CD8-positive, alpha-beta T cell (primary cell): ENCODE measurements at regions of chr1 and their contacts with region 1.

Region 1: GRCh38 chr1:32291708-32292492 is at the start of gene HDAC1:
- DNase-seq: peak; percentile 94 to 98 (median 97)
- ATAC-seq: peak; percentile 93
- H3K4me3 ChIP-seq: peak within 1 kb of the TSS; percentile 84 to 92
- H3K4me3 Mint-ChIP-seq: peak within 1 kb of the TSS; percentile 100
- H3K27ac ChIP-seq: peak within 1 kb of the TSS; percentile 68 to 69
- H3K27ac Mint-ChIP-seq: peak within 1 kb of the TSS; percentile 98
- H3K4me1 ChIP-seq: peaks cover 45% of the 10 kb centered on the region
- H3K4me1 Mint-ChIP-seq: peaks cover 52% of the 10 kb centered on the region
- H3K27me3 ChIP-seq: no peaks in the 10 kb centered on the region
- H3K27me3 Mint-ChIP-seq: no peaks in the 10 kb centered on the region
- CTCF ChIP-seq: no peak
- total RNA-seq, gene HDAC1: 57.8 to 61.4 TPM

Region 2: DNA sequence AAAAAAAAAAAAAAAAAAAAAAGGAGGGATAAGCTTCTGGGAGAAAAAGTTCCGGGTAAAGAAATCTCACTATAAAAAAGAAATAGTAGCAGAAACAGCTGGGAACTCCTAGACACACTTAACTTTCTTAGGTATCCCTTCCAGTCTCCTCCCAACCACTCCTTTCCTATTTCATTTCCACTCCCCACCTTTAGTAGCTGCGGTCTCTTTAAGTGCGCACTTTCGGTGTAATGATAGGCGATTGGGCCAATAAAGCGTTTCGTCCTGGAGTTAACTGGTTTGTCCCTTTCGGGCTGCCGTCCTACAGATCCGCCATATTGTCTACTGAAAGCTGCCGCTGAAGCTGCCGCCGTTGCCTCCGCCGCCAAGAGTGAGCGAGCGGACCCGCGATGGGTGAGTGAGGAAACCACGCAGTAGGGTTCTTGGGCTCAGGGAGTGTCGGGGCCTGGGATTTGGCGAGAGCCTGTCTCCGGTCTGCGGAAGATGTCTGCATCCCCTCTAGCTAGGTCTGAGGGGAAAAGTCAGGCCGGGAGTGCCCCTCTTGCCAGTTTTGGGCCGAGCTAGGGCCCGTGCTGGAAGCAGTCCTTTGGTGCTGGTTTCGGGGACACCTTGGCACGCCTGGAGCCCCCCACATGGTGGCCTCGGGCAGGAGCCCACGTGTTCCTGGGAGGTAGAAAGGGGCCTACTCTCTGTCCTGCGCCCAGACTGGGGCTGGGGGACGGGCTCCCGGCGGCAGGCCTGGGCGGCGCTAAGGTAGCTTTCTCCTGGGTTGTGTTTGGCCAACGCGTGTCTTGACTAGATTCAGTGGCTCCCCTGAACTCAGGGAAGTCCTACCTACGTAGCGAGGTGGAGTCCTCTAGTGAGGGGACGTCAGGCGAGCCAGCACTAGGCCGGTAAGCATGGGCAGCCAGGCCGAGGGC is 183.9 kb before region 1 on chr1 and contains the start of gene KPNA6:
- CTCF ChIA-PET with region 1: no interaction called
- POLR2A ChIA-PET with region 1: interaction called, 5 read pairs
- intact Hi-C with region 1: loop called (anchors 1 to 5 kb)
- DNase-seq: peak; percentile 83 to 98 (median 90)
- ATAC-seq: peak; percentile 89
- H3K4me3 ChIP-seq: peak within 1 kb of the TSS; percentile 87 to 95
- H3K4me3 Mint-ChIP-seq: peak within 1 kb of the TSS; percentile 98
- H3K27ac ChIP-seq: peak within 1 kb of the TSS; percentile 84 to 93
- H3K27ac Mint-ChIP-seq: peak within 1 kb of the TSS; percentile 98
- H3K4me1 ChIP-seq: peaks cover 45% of the 10 kb centered on the region
- H3K4me1 Mint-ChIP-seq: peaks cover 50% of the 10 kb centered on the region
- H3K27me3 ChIP-seq: no peaks in the 10 kb centered on the region
- H3K27me3 Mint-ChIP-seq: no peaks in the 10 kb centered on the region
- CTCF ChIP-seq: no peak
- total RNA-seq, gene KPNA6: 51.7 to 58.7 TPM

Region 3: DNA sequence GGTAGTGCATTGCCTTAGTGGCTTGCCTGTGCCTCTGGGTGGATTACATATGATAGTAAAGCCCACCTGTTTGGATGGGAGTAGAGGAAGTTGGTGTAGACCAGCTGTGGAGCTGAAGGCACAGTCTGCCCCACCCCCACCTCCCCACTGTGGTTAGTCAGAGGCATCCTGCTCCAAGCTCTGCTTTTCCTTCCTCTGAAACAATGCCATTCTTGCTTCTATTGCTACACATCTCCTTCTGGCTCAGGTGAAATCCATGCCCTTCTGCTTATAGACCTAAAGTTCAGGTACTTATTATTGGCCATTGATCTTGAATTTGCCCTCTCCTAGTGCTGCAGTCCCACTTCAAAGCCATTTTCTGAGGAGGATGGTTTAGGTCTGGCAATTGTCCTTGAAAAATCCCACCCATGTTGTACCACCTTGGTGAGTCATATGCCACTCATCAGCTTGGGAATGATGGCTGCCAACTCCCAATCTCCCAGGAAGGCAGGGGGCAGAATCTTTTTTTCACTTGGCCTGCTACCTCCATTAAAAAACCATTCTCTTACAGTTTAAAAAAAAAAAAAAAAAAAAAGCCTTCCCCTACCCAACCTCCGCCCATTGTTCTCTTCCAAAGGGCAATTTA is 119.2 kb before region 1 on chr1:
- CTCF ChIA-PET with region 1: no interaction called
- POLR2A ChIA-PET with region 1: no interaction called
- intact Hi-C with region 1: no loop called
- DNase-seq: no peak
- ATAC-seq: no peak
- H3K4me3 ChIP-seq: no peak overlapping the region
- H3K4me3 Mint-ChIP-seq: no peak overlapping the region
- H3K27ac ChIP-seq: no peak overlapping the region
- H3K27ac Mint-ChIP-seq: peak overlapping the region; percentile 21
- H3K4me1 ChIP-seq: peaks cover 9% of the 10 kb centered on the region
- H3K4me1 Mint-ChIP-seq: peaks cover 9% of the 10 kb centered on the region
- H3K27me3 ChIP-seq: no peaks in the 10 kb centered on the region
- H3K27me3 Mint-ChIP-seq: no peaks in the 10 kb centered on the region
- CTCF ChIP-seq: no peak

Region 4: DNA sequence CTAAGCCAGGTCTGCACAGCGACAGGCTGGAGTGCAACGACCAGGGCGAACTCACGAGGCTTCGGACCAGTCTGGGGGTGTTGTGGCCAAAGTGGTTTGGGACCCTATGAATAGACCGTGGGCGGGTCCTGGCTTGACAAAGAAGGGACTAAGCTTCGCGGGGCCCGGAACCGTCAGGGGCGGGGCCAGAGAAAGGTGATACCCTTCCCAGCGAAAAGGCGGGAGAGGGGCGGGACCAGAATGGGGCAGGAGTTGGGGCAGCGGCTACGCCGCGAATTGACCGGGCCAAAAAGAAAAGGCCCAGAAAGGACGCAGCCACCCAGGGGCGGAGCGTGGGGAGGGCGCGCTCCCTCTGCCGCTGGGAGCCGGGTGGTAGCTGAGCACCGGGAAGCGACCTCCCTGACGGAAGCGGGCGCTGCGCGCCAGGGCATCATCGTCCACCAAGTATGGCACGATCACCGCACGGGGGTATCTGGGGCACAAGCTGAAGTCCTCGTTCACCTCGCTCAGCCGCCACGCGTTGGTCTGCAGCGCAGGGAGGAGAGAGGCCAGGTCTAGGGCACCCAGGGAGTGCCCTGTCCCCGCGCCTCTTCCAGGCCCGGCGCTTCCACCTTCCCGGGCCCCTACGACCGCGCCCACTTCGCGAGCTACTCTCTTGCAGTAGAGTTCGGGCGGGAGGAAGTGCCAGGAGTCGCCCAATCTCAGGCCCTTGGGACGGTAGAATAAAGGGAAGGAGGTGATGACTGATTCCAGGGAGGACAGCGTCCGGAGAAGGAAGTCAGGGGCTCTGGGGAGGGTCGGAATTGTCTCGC is 51.6 kb before region 1 on chr1:
- CTCF ChIA-PET with region 1: interaction called, 5 read pairs
- POLR2A ChIA-PET with region 1: interaction called, 13 read pairs
- intact Hi-C with region 1: no loop called
- DNase-seq: peak in 8 of 9 experiments; percentile 26 to 85 (median 76)
- ATAC-seq: peak; percentile 69
- H3K4me3 ChIP-seq: peak overlapping the region; percentile 76 to 89
- H3K4me3 Mint-ChIP-seq: peak overlapping the region; percentile 90
- H3K27ac ChIP-seq: peak overlapping the region; percentile 22 to 49
- H3K27ac Mint-ChIP-seq: peak overlapping the region; percentile 62
- H3K4me1 ChIP-seq: peaks cover 26% of the 10 kb centered on the region
- H3K4me1 Mint-ChIP-seq: peaks cover 23% of the 10 kb centered on the region
- H3K27me3 ChIP-seq: no peaks in the 10 kb centered on the region
- H3K27me3 Mint-ChIP-seq: no peaks in the 10 kb centered on the region
- CTCF ChIP-seq: peak; percentile 24

Region 5: GRCh38 chr1:32273388-32274208 is 18.3 kb before region 1 on chr1:
- CTCF ChIA-PET with region 1: interaction called, 5 read pairs
- POLR2A ChIA-PET with region 1: interaction called, 26 read pairs
- intact Hi-C with region 1: loop called (anchors 1 to 2 kb)
- DNase-seq: peak; percentile 58 to 96 (median 87)
- ATAC-seq: peak; percentile 88
- H3K4me3 ChIP-seq: peak overlapping the region; percentile 23 to 53
- H3K4me3 Mint-ChIP-seq: peak overlapping the region; percentile 83
- H3K27ac ChIP-seq: peak overlapping the region; percentile 36 to 77
- H3K27ac Mint-ChIP-seq: peak overlapping the region; percentile 98
- H3K4me1 ChIP-seq: peaks cover 78% of the 10 kb centered on the region
- H3K4me1 Mint-ChIP-seq: peaks cover 67% of the 10 kb centered on the region
- H3K27me3 ChIP-seq: no peaks in the 10 kb centered on the region
- H3K27me3 Mint-ChIP-seq: no peaks in the 10 kb centered on the region
- CTCF ChIP-seq: no peak

Region 6: DNA sequence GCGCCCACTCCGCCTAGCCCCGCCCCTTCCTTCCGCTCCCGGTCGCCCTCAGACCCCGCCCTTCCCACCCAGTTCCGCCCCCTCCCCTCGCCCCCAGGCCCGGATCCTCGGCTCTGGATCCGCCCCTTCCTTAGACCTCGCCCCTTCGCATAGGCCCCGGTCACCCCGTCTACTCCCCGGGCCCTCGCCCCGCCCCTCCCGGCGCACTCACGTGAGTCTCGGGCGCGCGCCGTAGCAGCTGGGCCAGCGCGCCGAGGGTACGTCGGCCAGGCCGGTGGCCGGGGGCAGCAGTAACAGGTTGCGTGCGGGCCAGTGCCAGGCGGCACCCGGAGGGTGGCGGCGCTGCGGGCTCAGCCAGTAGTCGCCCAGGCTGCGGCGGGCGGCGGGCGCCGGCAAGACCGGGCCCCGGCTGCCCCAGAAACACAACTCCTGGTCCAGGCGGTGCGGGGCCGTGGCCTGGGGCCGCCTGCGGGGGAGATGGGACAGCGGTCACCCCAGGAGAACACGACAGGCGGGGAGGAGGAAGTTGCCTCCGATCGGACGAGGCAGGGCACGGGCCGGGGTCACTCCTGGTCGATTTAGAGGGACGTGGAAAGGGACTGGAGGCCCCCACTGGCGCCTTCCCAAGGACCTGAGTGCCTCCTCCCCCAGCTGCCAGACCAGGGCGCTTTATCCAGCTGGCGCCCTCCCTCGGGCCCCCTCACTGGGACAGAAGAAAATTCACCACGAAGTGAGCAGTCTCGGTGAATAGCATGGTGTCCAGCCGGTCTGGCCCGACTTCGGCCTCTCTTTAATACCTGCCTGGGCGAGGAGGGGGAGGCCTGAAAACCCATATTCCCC is 59.7 kb after region 1 on chr1:
- CTCF ChIA-PET with region 1: no interaction called
- POLR2A ChIA-PET with region 1: no interaction called
- intact Hi-C with region 1: loop called in 1 of 2 experiments (anchors 1 kb)
- DNase-seq: peak; percentile 81 to 97 (median 90)
- ATAC-seq: peak; percentile 95
- H3K4me3 ChIP-seq: peak overlapping the region; percentile 57 to 85
- H3K4me3 Mint-ChIP-seq: peak overlapping the region; percentile 81
- H3K27ac ChIP-seq: peak overlapping the region; percentile 60 to 69
- H3K27ac Mint-ChIP-seq: peak overlapping the region; percentile 49
- H3K4me1 ChIP-seq: peaks cover 30% of the 10 kb centered on the region
- H3K4me1 Mint-ChIP-seq: peaks cover 49% of the 10 kb centered on the region
- H3K27me3 ChIP-seq: no peaks in the 10 kb centered on the region
- H3K27me3 Mint-ChIP-seq: no peaks in the 10 kb centered on the region
- CTCF ChIP-seq: no peak

Region 7: GRCh38 chr1:32485554-32486255 is 193.8 kb after region 1 on chr1:
- CTCF ChIA-PET with region 1: no interaction called
- POLR2A ChIA-PET with region 1: no interaction called
- intact Hi-C with region 1: no loop called
- DNase-seq: no peak
- ATAC-seq: no peak
- H3K4me3 ChIP-seq: no peak overlapping the region
- H3K4me3 Mint-ChIP-seq: no peak overlapping the region
- H3K27ac ChIP-seq: no peak overlapping the region
- H3K27ac Mint-ChIP-seq: no peak overlapping the region
- H3K4me1 ChIP-seq: no peaks in the 10 kb centered on the region
- H3K4me1 Mint-ChIP-seq: no peaks in the 10 kb centered on the region
- H3K27me3 ChIP-seq: no peaks in the 10 kb centered on the region
- H3K27me3 Mint-ChIP-seq: peaks cover 14% of the 10 kb centered on the region
- CTCF ChIP-seq: no peak